ENCODE measurements at regions of chr17 and their contacts with region 1.

Region 1: DNA sequence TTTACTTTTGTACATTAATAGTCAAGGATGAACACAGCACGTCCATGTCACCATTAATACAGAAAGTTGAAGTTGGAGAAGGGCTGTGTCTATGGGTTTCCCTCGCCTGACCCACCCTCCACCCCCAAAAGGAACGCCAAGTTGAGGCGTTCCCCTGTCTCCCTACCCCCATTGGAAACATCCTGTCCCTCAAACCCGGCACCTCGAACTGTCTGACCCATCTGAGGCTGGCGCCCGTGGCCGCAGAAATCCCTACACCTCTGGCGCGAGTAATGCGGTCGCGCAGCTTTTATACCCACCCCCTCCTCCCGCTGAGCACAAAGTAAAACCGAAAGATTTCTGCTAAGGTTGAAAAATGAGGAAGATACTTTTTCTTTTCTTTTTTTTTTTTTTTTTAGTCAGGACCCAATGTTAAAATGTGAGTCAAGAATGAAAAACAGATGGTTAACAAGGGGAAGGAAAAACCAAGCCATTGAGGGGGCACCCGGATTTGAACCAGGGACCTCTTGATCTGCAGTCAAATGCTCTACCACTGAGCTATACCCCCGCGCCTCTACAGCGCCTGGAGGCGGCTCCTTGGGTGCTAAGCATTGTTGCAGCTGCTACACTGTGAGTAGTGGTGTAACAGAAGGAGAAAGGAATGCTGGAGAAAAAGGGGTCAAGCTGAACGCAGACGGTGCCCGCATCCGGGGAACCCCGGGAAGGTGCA is 887 bp upstream of the LASP1 start:
- DNase-seq: peak; percentile 95
- ATAC-seq: peak; percentile 56
- H3K4me3 Mint-ChIP-seq: peak overlapping the region; percentile 93
- H3K27ac Mint-ChIP-seq: peak overlapping the region; percentile 93
- H3K4me1 Mint-ChIP-seq: peaks cover 44% of the 10 kb centered on the region
- H3K27me3 Mint-ChIP-seq: peaks cover 2% of the 10 kb centered on the region

Region 2: DNA sequence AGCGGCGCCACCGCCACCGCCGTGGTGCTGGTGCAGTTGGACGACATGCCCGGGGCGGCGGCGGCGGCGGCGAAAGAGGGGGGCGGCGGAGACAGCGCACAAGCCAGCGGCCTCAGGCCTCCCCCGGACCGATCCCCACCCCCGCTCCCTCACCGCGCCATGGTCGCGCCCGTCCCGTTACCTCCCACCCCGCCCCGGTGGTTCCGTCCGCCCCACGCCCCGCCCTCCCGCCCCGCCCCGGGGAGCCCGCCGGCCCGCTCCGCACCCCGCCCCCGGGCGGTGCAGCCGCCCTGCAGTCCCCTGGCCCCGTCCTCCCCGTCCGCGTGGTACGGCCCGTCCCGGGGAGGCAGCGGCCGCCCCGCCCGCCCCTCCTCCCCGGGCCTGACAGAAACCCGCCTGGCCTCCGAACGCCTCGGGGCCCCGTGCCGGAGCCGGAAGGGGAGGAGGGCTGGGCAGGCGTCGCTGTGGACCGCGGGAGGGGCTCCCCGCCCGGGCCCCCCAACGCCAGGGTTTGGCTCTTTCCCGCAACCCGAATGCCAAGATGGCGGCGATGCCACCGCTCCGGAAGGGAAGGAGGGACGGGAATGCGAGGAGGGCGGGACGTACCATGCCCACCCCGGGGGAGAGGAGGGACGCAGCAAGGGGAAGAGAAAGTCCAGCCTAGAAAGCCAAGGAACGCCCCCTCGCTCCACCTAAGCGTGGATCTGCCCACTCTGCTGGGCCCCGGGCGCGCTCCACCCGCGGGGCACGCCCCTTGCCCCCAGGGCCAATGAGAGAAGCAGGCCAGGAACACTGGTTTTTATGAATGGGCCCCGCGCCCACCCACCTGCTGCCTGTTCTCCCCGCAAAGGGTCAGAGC is 69.4 kb before region 1 on chr17 and contains the start of gene PIP4K2B:
- CTCF ChIA-PET with region 1: interaction called, 3 read pairs
- POLR2A ChIA-PET with region 1: no interaction called
- intact Hi-C with region 1: loop called in 1 of 2 experiments (anchors 1 kb)
- DNase-seq: peak; percentile 93
- ATAC-seq: peak; percentile 83
- H3K4me3 Mint-ChIP-seq: peak within 1 kb of the TSS; percentile 99
- H3K27ac Mint-ChIP-seq: peak within 1 kb of the TSS; percentile 94
- H3K4me1 Mint-ChIP-seq: peaks cover 33% of the 10 kb centered on the region
- H3K27me3 Mint-ChIP-seq: no peaks in the 10 kb centered on the region
- total RNA-seq, gene PIP4K2B: 36.3 to 41.6 TPM

Region 3: DNA sequence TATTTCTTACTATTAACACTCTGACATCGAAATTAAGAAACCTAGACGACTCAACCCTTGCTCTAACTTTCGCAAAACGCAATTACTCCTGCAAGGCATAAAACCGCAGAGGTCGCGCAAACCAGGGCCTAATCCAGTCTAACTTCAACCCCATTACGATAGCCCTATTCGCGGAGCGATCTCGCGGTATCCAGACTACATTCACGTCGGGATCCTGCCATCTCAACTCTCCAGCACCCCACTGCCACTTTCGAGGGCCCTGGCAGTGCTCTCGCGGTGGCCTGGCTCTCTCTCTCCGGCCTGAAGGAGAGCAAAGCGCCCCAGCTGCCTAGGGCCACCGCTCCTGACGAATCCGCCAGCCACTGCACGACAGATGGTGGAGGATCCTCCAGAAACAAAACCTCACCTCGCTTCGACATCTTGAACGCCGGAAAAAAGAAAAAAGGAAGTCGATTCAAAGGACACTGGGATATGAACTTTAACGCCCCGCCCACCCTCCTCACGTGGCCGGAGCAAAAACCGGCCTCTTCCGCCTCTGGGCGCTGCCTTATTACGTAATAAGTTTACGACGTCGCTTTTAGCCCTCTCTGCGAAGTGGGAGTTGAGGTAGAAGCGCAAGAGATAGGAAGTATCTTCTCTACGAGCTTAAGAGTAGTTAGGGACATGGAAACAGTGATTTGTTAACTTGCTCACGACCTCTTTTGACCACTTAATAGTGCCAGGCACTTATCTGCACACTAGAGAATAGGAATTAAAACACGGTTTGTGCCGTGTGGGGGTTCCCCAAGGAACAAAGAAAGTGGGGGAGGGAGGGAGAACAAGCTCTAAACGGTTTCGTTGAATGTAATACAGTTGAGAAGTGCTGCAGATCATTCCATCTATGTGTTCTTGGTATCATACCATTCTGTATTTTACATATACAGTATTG is 15.4 kb before region 1 on chr17 and contains the start of gene RPL23:
- CTCF ChIA-PET with region 1: interaction called, 4 read pairs
- POLR2A ChIA-PET with region 1: interaction called, 36 read pairs
- intact Hi-C with region 1: loop called (anchors 1 kb)
- DNase-seq: peak; percentile 96
- ATAC-seq: peak; percentile 87
- H3K4me3 Mint-ChIP-seq: peak within 1 kb of the TSS; percentile 99
- H3K27ac Mint-ChIP-seq: peak within 1 kb of the TSS; percentile 99
- H3K4me1 Mint-ChIP-seq: peaks cover 46% of the 10 kb centered on the region
- H3K27me3 Mint-ChIP-seq: no peaks in the 10 kb centered on the region
- total RNA-seq, gene RPL23: 1,886 to 1,896 TPM

Region 4: DNA sequence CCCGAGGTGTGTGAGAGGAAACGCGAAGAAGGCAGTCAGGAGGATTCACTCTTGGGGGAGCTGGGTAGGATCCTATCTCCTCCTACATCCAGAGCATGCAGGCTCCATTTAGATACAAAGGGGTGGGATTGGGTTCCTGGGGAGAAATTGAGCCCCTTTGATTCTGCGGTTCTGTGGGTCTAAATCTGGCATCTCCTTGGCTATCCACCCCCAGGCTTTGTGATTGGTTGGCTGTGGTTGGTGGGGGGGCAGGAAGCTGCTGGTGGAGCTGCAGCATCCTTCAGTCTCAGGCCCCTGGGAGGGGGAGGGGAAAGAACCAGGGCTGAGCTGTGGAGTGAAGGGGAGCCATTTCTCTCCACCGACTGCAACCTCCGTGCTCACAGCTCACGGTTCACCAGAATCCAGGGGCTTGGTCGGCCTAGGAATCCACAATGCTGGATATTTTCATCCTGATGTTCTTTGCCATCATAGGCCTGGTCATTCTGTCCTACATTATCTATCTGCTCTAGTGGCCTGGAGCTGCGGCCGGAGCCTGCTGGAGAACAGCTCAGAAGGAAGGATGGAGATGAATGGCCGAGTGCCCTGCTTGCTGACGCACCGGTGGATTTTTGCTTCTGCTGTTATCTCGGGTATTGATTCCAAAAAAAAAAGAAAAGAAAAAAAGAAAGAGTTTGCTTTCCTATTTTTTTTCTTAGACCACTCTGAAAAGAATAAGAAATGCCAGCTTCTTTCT is 56.5 kb after region 1 on chr17 and contains the start of gene LASP1NB:
- CTCF ChIA-PET with region 1: interaction called, 6 read pairs
- POLR2A ChIA-PET with region 1: interaction called, 6 read pairs
- intact Hi-C with region 1: loop called in 1 of 2 experiments (anchors 2 kb)
- DNase-seq: peak; percentile 73
- ATAC-seq: peak; percentile 37
- H3K4me3 Mint-ChIP-seq: peak within 1 kb of the TSS; percentile 3
- H3K27ac Mint-ChIP-seq: peak within 1 kb of the TSS; percentile 38
- H3K4me1 Mint-ChIP-seq: peaks cover 43% of the 10 kb centered on the region
- H3K27me3 Mint-ChIP-seq: no peaks in the 10 kb centered on the region

Region 5: DNA sequence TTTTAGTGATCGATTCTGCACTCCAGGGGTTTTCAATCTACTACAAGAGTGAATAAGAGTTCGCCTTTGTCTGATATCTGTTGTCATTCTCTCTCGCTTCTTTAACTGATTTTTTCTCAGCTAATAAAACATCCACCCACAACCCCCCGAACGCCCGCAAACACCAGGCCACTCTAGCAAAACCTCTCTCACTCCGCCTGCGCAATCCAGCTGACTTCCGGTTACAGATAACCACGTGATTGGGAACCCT is 330.8 kb after region 1 on chr17:
- CTCF ChIA-PET with region 1: interaction called, 3 read pairs
- POLR2A ChIA-PET with region 1: no interaction called
- intact Hi-C with region 1: loop called in 1 of 2 experiments (anchors 5 kb)
- DNase-seq: peak; percentile 95
- ATAC-seq: peak; percentile 69
- H3K4me3 Mint-ChIP-seq: peak overlapping the region; percentile 98
- H3K27ac Mint-ChIP-seq: peak overlapping the region; percentile 100
- H3K4me1 Mint-ChIP-seq: peaks cover 51% of the 10 kb centered on the region
- H3K27me3 Mint-ChIP-seq: no peaks in the 10 kb centered on the region

Measured in activated CD4-positive, alpha-beta T cell treated with anti-CD3 and anti-CD28 coated beads for 36 hours (primary cell).